Activated CD8-positive, alpha-beta T cell treated with anti-CD3 and anti-CD28 coated beads for 36 hours (primary cell): ENCODE measurements at regions of chr12 and their contacts with region 1.

Region 1: GRCh38 chr12:112108201-112109079 is at the start of gene NAA25:
- DNase-seq: peak; percentile 93
- ATAC-seq: peak; percentile 79
- H3K4me3 Mint-ChIP-seq: peak within 1 kb of the TSS; percentile 91
- H3K27ac Mint-ChIP-seq: peak within 1 kb of the TSS; percentile 99
- H3K4me1 Mint-ChIP-seq: peaks cover 52% of the 10 kb centered on the region
- H3K27me3 Mint-ChIP-seq: no peaks in the 10 kb centered on the region
- CTCF ChIP-seq: no peak
- total RNA-seq, gene NAA25: 46.0 to 48.3 TPM

Region 2: DNA sequence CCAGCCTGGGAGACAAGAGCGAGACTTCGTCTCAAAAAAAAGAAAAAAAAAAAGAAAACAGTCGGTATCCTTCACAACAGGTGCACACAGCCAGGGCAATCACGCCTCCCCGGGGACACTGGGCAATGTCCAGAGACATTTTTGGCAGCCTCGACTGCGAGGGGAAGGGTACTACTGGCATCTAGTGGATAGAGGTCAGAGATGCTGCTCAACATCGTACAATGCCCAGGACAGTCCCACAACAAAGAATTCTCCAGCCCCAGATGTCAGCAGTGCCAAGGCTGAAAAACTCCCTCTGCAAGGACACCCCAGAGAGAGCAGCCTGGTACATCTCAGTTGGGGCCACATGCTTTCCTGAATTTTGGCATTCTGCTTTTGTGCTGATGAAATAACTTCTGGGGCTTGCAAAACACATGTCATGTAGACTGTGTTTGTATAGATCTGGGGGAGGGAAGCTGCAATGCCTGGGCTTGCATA is 320.2 kb before region 1 on chr12:
- CTCF ChIA-PET with region 1: no interaction called
- POLR2A ChIA-PET with region 1: no interaction called
- intact Hi-C with region 1: no loop called
- DNase-seq: no peak
- ATAC-seq: no peak
- H3K4me3 Mint-ChIP-seq: no peak overlapping the region
- H3K27ac Mint-ChIP-seq: no peak overlapping the region
- H3K4me1 Mint-ChIP-seq: no peaks in the 10 kb centered on the region
- H3K27me3 Mint-ChIP-seq: no peaks in the 10 kb centered on the region
- CTCF ChIP-seq: no peak

Region 3: GRCh38 chr12:112012775-112013600 is 95.5 kb before region 1 on chr12 and contains the starts of genes ERP29 and TMEM116:
- CTCF ChIA-PET with region 1: no interaction called
- POLR2A ChIA-PET with region 1: interaction called, 14 read pairs
- intact Hi-C with region 1: no loop called
- DNase-seq: peak; percentile 100
- ATAC-seq: peak; percentile 85
- H3K4me3 Mint-ChIP-seq: peak within 1 kb of the TSS; percentile 98
- H3K27ac Mint-ChIP-seq: peak within 1 kb of the TSS; percentile 98
- H3K4me1 Mint-ChIP-seq: peaks cover 45% of the 10 kb centered on the region
- H3K27me3 Mint-ChIP-seq: no peaks in the 10 kb centered on the region
- CTCF ChIP-seq: peak; percentile 63
- total RNA-seq, gene ERP29: 82.9 to 83.7 TPM
- total RNA-seq, gene TMEM116: 13.8 to 16.3 TPM

Region 4: DNA sequence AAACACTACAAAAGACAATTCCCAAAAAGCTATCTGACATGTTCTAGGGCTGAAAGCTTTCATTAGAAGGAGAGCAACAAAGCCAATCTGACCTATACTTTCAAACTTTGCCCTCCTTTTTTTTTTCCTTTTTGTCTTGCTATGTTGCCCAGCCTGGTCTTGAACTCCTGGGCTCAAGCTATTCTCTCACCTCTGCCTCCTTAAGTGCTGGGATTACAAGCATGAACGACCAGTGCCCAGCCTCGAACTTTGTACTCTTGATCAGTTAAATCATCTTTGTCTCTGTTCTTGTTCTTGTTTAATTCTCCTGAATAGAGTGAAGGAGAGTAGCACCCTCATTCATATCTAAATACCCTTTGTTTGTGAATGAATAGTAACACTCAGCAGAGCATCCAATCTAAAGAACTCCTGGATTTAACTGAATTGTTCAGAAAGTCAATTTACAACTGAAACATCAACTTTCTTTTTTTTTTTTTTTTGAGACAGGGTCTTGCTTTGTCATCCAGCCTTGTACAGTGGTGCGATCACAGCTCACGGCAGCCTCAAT is 73.1 kb before region 1 on chr12:
- CTCF ChIA-PET with region 1: no interaction called
- POLR2A ChIA-PET with region 1: no interaction called
- intact Hi-C with region 1: no loop called
- DNase-seq: no peak
- ATAC-seq: no peak
- H3K4me3 Mint-ChIP-seq: no peak overlapping the region
- H3K27ac Mint-ChIP-seq: no peak overlapping the region
- H3K4me1 Mint-ChIP-seq: no peaks in the 10 kb centered on the region
- H3K27me3 Mint-ChIP-seq: no peaks in the 10 kb centered on the region
- CTCF ChIP-seq: no peak

Region 5: GRCh38 chr12:112096667-112097066 is 11.8 kb before region 1 on chr12:
- CTCF ChIA-PET with region 1: interaction called, 15 read pairs
- POLR2A ChIA-PET with region 1: interaction called, 28 read pairs
- intact Hi-C with region 1: no loop called
- DNase-seq: peak; percentile 41
- ATAC-seq: peak; percentile 93
- H3K4me3 Mint-ChIP-seq: no peak overlapping the region
- H3K27ac Mint-ChIP-seq: peak overlapping the region; percentile 91
- H3K4me1 Mint-ChIP-seq: peaks cover 42% of the 10 kb centered on the region
- H3K27me3 Mint-ChIP-seq: no peaks in the 10 kb centered on the region
- CTCF ChIP-seq: no peak

Region 6: DNA sequence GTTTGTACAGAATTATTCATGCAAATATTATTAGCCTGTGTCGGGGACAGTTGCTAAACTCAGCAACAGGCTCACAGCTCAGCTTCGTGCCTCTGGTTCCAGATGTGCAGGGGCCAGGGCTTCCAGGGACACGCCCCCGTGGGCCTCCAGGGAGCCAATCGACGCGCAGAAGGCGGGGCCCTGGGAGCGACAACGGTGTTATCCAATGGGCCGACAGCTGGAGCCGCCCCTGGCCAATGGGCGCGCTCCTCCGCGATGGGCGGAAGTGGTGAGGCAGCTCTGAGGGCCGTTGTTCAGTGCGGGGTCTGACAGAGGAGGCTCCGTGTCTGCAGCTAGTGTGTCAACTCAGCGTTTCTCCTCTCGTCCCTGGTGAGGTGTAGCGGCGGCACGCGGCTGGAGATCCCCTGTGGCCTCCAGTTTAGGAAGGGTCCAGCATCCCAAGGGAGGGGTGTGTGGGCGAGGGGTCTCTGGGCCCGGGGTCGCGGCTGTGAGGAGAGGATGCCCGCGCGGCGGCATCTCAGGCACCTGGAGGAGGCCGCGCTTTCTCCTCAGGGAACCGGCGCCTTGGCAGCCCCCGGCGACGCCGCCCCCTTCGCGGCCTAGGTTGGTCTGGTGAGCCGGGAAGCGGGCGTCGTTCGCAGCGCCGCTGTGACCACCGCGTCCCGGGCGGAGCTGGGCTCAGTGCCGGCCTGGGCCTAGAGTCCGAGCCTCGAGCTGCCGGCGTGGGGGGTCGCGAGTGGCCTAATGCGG is 17.0 kb after region 1 on chr12 and contains the start of gene TRAFD1:
- CTCF ChIA-PET with region 1: interaction called, 6 read pairs
- POLR2A ChIA-PET with region 1: interaction called, 117 read pairs
- intact Hi-C with region 1: no loop called
- DNase-seq: peak; percentile 99
- ATAC-seq: peak; percentile 99
- H3K4me3 Mint-ChIP-seq: peak within 1 kb of the TSS; percentile 85
- H3K27ac Mint-ChIP-seq: peak within 1 kb of the TSS; percentile 90
- H3K4me1 Mint-ChIP-seq: peaks cover 34% of the 10 kb centered on the region
- H3K27me3 Mint-ChIP-seq: no peaks in the 10 kb centered on the region
- CTCF ChIP-seq: no peak
- total RNA-seq, gene TRAFD1: 34.6 to 35.8 TPM

Region 7: DNA sequence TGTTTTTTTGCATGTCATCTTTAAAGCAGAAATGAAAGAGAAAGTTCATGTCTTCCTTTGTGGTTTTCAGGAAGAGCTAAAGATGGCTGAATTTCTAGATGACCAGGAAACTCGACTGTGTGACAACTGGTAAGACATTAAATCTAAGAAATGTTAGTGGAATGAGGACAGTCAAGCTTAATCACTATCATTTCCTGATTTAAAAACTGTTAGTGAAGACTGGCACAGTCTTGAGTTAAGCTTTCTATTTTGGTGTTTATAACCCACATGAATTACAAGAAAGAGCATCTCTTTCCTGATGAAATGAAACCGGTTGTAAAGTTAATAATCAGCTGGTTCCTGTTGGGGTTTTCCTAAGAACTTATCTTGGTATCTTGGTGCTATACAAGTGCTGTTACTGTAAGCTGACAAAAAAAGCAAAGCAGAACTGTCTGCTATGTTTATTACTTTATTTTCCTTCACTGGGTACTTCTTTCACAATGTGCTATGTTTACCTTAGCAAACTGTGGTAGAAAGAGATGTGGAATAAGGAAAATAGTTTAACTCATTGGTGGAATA is 22.1 kb after region 1 on chr12:
- CTCF ChIA-PET with region 1: interaction called, 6 read pairs
- POLR2A ChIA-PET with region 1: interaction called, 117 read pairs
- intact Hi-C with region 1: no loop called
- DNase-seq: no peak
- ATAC-seq: peak; percentile 69
- H3K4me3 Mint-ChIP-seq: peak overlapping the region; percentile 57
- H3K27ac Mint-ChIP-seq: peak overlapping the region; percentile 89
- H3K4me1 Mint-ChIP-seq: peaks cover 53% of the 10 kb centered on the region
- H3K27me3 Mint-ChIP-seq: no peaks in the 10 kb centered on the region
- CTCF ChIP-seq: no peak